ENCODE measurements at regions of chr17 and their contacts with region 1.

Region 1: DNA sequence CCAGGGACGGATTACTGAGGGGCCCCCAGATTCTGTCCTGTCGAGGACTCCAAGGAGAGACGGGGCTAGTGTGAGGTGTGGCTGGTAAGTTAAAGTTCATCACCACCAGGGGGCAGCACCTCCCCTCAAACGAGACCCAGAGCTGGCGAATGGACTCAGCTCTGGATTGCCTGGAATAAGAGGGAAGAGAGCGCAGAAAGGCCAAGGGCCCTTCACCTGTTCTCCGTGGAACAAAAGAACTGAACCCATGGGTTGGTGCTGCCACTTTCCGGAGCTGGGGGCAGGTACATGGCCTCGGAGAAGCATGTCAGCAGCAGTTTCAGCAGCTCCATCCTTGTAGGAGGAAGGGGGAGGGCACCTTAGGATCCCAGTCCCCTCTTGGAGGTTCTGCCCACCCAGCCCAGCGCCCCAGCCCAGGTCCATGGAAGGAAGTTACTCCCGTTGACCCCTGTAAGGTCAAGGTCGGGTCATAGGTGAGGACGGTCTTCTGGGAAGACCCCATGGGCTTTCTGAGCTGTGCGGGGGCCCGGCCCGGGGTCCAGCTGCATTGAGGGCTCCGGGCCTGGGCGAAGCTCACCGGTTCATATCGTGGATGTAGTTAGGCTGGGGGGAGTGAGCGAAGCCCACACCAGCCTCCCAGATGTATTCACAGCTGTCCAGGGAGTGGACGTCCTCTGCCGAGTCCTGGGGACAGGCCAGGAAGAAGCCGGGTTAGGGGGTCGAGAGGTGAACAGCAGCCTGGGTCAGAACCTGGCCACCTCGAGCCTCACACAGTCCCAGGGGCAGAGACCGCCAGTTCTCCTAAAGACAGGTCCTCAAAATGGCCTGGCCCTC is 10.7 kb downstream of the HID1 start:
- DNase-seq: peak; percentile 71 to 78
- ATAC-seq: peak; percentile 93 to 96
- H3K4me3 ChIP-seq: no peak overlapping the region
- H3K27ac ChIP-seq: no peak overlapping the region
- H3K4me1 ChIP-seq: no peaks in the 10 kb centered on the region
- H3K27me3 ChIP-seq: no peaks in the 10 kb centered on the region
- CTCF ChIP-seq: peak; percentile 64 to 90 (median 85)
- POLR2A ChIP-seq: no peak

Region 2: DNA sequence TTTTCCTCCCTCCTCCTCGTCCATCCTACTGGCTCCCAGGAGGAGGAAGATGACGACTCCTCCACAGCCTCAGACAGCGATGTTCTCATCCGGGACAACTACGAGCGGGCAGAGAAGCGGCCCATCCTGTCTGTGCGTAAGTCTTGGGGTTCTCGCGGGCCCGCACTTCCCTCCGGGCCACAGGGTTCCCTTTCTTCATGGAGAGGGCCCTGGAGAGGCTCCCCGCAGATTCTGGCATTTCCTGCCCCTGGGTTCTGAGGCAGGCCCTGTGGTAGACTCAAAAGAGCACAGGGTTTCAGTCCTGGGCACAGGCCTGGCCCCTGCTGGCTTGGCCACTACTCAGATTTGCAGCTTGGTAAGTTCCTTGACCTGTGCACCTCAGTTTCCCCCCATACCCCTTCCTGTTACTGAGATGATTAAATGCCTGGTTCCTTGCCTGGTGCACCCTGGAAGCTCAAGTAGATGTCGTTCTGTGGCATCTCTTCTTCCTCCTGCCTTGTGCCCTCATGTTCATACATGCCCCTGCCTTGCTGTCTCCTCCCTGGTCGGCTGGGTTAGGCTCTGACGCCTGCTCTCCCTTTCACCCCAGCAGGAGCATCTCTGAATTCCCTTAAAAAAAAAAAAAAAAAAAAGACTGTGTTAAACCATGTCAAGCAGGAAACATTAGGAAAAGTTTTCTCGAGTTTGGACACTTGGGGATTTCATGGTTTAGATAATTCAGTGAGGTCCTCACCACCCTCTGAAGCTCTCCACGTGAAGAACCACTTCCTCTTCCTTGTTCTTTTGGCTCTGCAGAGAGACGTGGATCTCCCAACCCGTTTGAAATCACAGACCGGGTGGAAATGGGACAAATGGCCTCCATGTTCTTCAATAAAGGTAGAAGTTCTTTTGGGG is 171.5 kb before region 1 on chr17:
- in situ Hi-C with region 1: no loop called
- intact Hi-C with region 1: loop called (anchors 5 kb)
- DNase-seq: no peak
- ATAC-seq: no peak
- H3K4me3 ChIP-seq: no peak overlapping the region
- H3K27ac ChIP-seq: no peak overlapping the region
- H3K4me1 ChIP-seq: no peaks in the 10 kb centered on the region
- H3K27me3 ChIP-seq: no peaks in the 10 kb centered on the region
- CTCF ChIP-seq: no peak
- POLR2A ChIP-seq: no peak

Region 3: DNA sequence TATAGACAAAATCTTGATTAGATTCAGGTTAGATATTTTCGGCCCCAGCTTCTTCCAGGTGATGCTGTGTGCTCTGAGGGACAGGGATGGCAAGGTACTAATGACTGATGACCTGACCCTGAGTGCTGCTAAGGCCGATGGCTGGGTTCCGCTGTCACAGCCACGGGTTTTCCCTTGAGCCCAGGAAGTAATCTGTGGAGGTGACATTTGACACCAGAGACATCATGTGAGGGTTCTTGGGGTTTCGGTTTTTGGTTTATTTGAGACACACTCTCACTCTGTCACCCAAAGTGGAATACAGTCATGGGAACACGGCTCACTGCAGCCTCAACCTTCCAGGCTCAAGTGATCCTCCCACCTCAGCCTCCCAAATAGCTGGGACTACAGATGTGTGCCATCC is 16.3 kb before region 1 on chr17:
- in situ Hi-C with region 1: no loop called
- intact Hi-C with region 1: no loop called
- DNase-seq: no peak
- ATAC-seq: no peak
- H3K4me3 ChIP-seq: no peak overlapping the region
- H3K27ac ChIP-seq: no peak overlapping the region
- H3K4me1 ChIP-seq: no peaks in the 10 kb centered on the region
- H3K27me3 ChIP-seq: peaks cover 0 to 20% (median 16%) of the 10 kb centered on the region in 3 donors
- CTCF ChIP-seq: no peak
- POLR2A ChIP-seq: no peak

Region 4: DNA sequence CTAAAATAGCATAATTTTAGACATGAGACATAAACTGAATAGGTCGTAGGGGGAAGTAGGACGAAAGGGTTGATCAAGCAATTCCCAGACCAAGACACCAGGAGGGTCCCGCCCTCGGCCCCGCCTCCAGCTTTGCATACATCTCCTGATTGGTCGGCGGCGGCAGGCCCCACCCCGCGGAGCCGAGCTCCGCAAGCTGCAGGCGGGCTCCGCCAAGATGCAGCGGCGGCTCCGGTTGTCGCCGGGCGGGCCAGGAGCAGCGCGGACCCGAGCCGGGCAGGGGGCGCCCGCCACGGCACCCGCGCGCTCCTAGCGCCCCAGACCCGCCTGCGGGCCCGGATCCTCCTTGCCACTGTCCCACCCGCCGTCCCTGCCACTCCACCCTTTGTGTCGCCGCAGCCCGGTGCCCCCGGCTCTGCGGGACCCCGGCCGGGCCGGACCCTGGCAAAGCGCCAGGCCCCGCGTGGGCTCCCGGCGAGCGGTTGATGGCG is 25.6 kb after region 1 on chr17 and contains the start of gene CDR2L:
- in situ Hi-C with region 1: no loop called
- intact Hi-C with region 1: loop called (anchors 1 kb)
- DNase-seq: peak; percentile 92
- ATAC-seq: peak; percentile 89 to 90
- H3K4me3 ChIP-seq: peak within 1 kb of the TSS; percentile 63 to 87 (median 70)
- H3K27ac ChIP-seq: peak within 1 kb of the TSS; percentile 82 to 86 (median 84)
- H3K4me1 ChIP-seq: peaks cover 11 to 21% of the 10 kb centered on the region in 2 donors
- H3K27me3 ChIP-seq: peaks cover 0 to 9% (median 8%) of the 10 kb centered on the region in 3 donors
- CTCF ChIP-seq: no peak
- POLR2A ChIP-seq: peak; percentile 82 to 87
- total RNA-seq, gene CDR2L: 1.3 to 3.6 (median 2.6) TPM

Region 5: DNA sequence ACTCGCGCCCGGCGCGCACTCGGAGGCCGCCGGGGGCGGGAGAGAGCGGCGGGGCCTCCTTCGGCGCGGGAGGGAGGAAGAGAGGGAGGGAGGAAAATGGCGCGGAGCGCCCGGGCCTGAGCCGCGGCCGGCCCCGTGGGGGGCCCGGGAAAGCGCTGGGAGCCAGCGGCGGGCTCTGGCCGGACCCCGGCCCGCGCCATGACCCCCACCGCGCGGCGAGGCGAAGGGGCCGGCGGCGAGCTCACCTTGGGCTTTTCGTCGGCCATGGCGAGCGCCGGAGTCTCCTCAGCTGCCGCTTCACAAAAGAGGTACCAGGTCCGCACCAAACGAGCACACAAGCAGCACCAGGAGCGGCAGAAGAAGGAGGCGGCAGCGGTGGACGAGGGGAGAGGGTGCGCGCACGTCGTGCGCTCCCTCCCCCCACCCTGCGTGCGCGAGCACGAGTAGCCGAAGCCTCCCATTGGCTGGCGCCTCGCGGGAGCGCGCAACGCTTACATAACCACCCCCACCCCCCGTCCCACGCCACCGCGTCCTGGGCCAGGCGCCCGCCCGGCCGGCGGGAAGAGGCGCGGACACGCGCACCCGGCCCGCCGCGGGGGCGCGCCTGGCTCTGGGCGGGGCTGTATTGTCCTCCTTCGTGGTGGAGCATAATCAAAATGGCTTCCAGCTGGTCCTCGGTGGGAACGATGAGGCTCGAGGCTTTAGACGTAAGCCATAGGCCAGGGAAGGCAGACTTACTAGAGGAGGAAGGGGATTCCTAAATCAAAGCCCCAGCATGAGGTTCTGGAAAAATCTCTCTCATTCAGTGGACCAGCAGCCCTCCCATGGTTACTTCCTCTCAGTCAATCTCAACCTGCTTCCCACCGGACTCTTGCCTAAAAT is 220.9 kb after region 1 on chr17 and contains the start of gene SUMO2:
- in situ Hi-C with region 1: loop called in 1 of 4 experiments (anchors 25 kb)
- intact Hi-C with region 1: no loop called
- DNase-seq: peak; percentile 93 to 96
- ATAC-seq: peak; percentile 93 to 96
- H3K4me3 ChIP-seq: peak within 1 kb of the TSS; percentile 88 to 99 (median 93)
- H3K27ac ChIP-seq: peak within 1 kb of the TSS; percentile 90 to 100 (median 96)
- H3K4me1 ChIP-seq: peaks cover 27 to 28% of the 10 kb centered on the region in 2 donors
- H3K27me3 ChIP-seq: no peaks in the 10 kb centered on the region
- CTCF ChIP-seq: peak in 4 of 5 experiments; percentile 38 to 65 (median 48)
- POLR2A ChIP-seq: peak; percentile 72 to 79
- total RNA-seq, gene SUMO2: 36.7 to 45.1 (median 43.3) TPM